ENCODE measurements at regions of chr1 and their contacts with region 1.

Region 1: DNA sequence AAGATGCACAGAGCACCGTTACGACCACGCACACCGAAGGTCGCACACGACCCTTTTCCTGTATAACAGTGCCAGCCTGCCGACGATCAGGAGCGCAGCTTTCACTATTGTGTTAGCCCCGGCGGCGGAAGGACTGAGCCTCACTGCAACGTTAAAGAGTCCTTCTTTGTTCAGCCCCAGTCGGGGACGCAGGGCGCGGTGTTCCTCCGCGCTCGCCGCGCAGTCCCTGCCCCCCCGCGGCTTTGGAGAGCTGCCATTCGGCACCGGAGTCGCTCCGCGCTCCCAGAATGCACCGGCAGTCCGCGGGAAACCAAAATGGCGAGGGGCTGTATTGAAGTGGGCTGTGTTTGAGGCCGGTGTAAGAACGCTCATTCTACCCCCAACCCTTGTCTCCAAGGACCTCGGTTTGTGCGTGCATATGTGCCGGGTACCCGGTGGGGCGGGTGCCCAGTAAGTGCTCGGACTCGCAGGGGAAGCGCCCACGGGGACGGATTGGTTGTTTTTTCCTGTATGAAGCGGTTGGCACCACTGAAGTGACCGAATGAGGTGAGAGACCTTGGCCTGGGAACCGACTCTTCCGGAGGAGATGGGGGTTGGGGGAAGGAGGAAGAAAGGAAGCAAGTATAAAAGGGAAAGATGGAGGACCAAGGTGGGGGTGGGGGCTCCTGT is at the start of gene MTF2:
- DNase-seq: peak; percentile 91 to 98
- H3K4me3 ChIP-seq: peak within 1 kb of the TSS; percentile 82 to 100 (median 98)
- H3K27ac ChIP-seq: peak within 1 kb of the TSS; percentile 97
- H3K4me1 ChIP-seq: no peaks in the 10 kb centered on the region; a peak in 2 of 7 replicates
- H3K27me3 ChIP-seq: no peaks in the 10 kb centered on the region
- CTCF ChIP-seq: peak in 1 of 3 experiments; percentile 19; a peak in 1 of 4 replicates
- EP300 ChIP-seq: peak; percentile 21 to 96
- POLR2A ChIP-seq: peak; percentile 96 to 98
- RAD21 ChIP-seq: peak; percentile 22 to 24; a peak in 1 of 4 replicates
- total RNA-seq, gene MTF2: 101 and 102 TPM in 2 replicates

Region 2: DNA sequence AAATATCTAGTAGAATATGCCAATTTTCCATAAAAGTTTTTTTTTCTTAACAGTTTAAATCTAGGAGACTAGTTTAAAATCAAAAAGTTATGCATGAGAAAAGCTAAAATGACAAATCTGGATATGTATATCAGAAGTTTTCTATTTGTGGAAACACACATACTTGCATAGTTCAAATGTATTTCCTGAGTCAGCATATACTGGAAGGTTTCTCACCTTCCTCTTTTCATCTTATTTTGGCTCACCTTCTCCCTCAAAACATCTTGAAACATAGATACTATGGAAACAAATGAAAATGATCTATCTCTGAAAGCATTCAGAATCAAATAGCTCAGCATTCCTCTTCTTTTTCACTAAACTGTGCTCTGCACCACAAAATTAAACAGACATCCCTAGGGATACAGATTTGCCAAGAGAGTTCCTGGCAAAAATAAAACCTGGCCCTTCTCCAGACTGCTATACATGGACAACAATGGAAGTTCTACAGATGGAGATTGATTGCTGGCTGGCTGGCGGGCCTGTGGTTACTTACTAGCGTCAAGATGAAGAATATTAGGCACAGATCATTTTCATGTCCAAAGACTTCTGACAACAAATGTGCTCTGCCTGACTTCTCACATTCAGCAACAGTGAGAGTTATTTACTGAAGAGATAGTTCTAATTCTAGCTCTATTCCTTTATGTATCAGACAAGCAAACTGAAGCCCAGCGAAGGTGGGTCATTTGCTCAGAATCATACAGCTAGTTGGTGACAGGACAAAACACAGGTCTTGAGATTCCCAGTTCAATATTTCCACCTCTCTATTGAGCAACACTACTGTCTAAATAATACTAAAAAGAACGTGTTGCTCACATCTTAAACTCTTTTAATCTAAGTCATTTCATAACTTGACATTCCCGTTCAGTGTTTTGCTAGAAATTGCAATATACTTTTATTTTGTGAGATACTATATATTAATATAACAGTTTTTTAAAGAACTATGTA is 144.4 kb before region 1 on chr1:
- CTCF ChIA-PET with region 1: no interaction called
- POLR2A ChIA-PET with region 1: no interaction called
- DNase-seq: no peak
- H3K4me3 ChIP-seq: no peak overlapping the region
- H3K27ac ChIP-seq: no peak overlapping the region
- H3K4me1 ChIP-seq: no peaks in the 10 kb centered on the region
- H3K27me3 ChIP-seq: no peaks in the 10 kb centered on the region
- CTCF ChIP-seq: no peak
- EP300 ChIP-seq: no peak
- POLR2A ChIP-seq: no peak
- RAD21 ChIP-seq: no peak

Region 3: DNA sequence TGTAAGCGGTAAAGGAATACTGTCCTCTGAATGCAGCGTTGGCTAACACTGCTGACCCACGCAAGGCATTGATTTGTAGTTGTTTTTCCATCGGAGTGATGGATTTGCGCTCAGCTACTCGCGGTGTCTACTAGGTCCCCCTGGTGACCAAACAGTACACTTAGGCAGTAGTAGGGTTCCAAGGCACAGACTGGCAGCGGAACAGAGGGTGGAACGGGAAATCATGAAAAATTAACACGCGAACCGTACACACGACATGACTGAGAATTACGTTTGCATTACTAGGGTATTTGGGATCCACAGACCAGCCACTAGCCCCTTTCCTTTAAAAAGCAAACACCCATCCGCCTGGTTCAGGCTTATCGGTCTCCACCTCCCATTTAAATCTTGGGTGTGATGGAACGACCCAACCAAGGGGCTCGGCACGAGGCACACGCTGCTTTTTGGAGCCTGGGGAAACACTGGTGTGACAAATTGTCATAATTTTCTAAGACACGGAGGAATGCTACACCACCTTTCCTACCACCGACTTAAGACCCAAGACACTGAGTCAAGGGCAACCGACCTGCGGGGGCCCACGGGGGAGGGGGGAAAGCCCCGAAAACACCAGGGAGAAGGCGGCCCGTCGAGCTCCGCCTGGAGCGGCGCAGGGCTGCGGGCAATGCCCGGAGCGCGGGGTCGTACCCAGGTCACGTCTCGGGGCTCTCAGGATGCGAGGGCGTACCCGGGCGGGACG is 118.6 kb before region 1 on chr1:
- CTCF ChIA-PET with region 1: no interaction called
- POLR2A ChIA-PET with region 1: interaction called, 11 read pairs
- DNase-seq: no peak
- H3K4me3 ChIP-seq: peak overlapping the region; percentile 55 to 81 (median 63)
- H3K27ac ChIP-seq: no peak overlapping the region
- H3K4me1 ChIP-seq: peaks cover 0 to 4% (median 1%) of the 10 kb centered on the region in 4 experiments; a peak in 4 of 7 replicates
- H3K27me3 ChIP-seq: peaks cover 0 to 7% (median 2%) of the 10 kb centered on the region in 4 experiments; a peak in 4 of 7 replicates
- CTCF ChIP-seq: peak; percentile 57 to 69 (median 59)
- EP300 ChIP-seq: no peak
- POLR2A ChIP-seq: no peak
- RAD21 ChIP-seq: peak; percentile 55 to 65

Region 4: GRCh38 chr1:92987462-92987861 is 91.7 kb before region 1 on chr1:
- CTCF ChIA-PET with region 1: no interaction called
- POLR2A ChIA-PET with region 1: no interaction called
- DNase-seq: no peak
- H3K4me3 ChIP-seq: no peak overlapping the region
- H3K27ac ChIP-seq: no peak overlapping the region
- H3K4me1 ChIP-seq: no peaks in the 10 kb centered on the region
- H3K27me3 ChIP-seq: no peaks in the 10 kb centered on the region
- CTCF ChIP-seq: no peak
- EP300 ChIP-seq: no peak
- POLR2A ChIP-seq: no peak
- RAD21 ChIP-seq: no peak

Region 5: DNA sequence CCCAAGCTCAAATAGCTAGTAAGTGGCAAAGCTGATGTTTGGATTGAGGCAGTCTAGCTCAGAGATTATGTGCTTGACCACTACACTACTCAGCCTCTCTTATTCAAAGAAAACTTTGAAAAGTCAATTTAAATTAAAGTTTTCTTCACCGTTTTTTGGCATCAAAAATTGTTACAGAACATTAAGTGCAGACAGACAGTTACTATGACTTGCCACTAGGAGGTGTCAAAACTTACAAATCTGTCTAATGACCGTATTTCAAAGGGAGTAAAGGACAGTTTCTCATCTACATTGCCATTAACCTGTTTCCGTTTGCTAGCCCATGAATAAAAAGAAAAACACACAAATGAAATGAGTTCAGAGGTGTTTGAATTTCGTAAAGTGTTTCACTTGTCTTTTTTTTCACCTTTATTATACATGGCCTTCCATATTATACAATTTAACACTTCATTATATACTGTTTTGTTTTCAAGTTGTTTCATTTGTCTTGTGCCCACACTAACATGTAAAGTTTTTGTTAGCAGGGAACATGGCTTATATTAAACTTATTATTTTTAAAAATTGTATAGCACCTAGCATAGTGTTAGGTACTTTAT is 57.5 kb before region 1 on chr1:
- CTCF ChIA-PET with region 1: interaction called, 3 read pairs
- POLR2A ChIA-PET with region 1: interaction called, 10 read pairs
- DNase-seq: no peak
- H3K4me3 ChIP-seq: no peak overlapping the region
- H3K27ac ChIP-seq: no peak overlapping the region
- H3K4me1 ChIP-seq: no peaks in the 10 kb centered on the region; a peak in 1 of 7 replicates
- H3K27me3 ChIP-seq: no peaks in the 10 kb centered on the region
- CTCF ChIP-seq: peak in 2 of 3 experiments; percentile 55 to 71; a peak in 2 of 4 replicates
- EP300 ChIP-seq: no peak
- POLR2A ChIP-seq: no peak
- RAD21 ChIP-seq: peak; percentile 82 to 84

Region 6: GRCh38 chr1:93061895-93062792 is 17.0 kb before region 1 on chr1:
- CTCF ChIA-PET with region 1: interaction called, 6 read pairs
- POLR2A ChIA-PET with region 1: interaction called, 65 read pairs
- DNase-seq: peak in 1 of 2 experiments; percentile 49
- H3K4me3 ChIP-seq: no peak overlapping the region
- H3K27ac ChIP-seq: no peak overlapping the region
- H3K4me1 ChIP-seq: no peaks in the 10 kb centered on the region
- H3K27me3 ChIP-seq: no peaks in the 10 kb centered on the region
- CTCF ChIP-seq: peak; percentile 58 to 78 (median 75)
- EP300 ChIP-seq: no peak
- POLR2A ChIP-seq: no peak
- RAD21 ChIP-seq: peak; percentile 86 to 89

Region 7: DNA sequence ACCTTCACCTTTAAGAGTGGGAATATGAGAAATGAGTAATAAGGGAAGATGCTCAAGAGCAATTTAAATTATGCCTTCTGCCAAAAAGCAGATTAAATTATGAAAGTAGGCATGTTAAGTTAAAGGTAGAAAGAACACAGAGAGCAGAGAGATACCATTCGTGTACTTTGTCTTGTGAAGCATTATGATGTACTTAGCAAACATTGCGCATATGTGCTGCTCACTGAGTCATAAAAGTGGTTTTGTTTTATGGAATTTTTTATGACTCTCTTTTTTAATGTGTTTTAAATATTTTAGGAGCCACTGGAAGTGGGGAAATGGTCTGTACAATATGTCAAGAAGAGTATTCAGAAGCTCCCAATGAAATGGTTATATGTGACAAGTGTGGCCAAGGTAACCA is 35.3 kb after region 1 on chr1:
- CTCF ChIA-PET with region 1: interaction called, 7 read pairs
- POLR2A ChIA-PET with region 1: interaction called, 17 read pairs
- DNase-seq: no peak
- H3K4me3 ChIP-seq: no peak overlapping the region
- H3K27ac ChIP-seq: no peak overlapping the region
- H3K4me1 ChIP-seq: peaks cover 0 to 8% (median 0%) of the 10 kb centered on the region in 4 experiments; a peak in 1 of 7 replicates
- H3K27me3 ChIP-seq: no peaks in the 10 kb centered on the region
- CTCF ChIP-seq: no peak
- EP300 ChIP-seq: no peak
- POLR2A ChIP-seq: no peak
- RAD21 ChIP-seq: no peak

Region 8: GRCh38 chr1:93179886-93180722 is 101.0 kb after region 1 on chr1 and contains the start of gene TMED5:
- CTCF ChIA-PET with region 1: no interaction called
- POLR2A ChIA-PET with region 1: interaction called, 11 read pairs
- DNase-seq: peak; percentile 91 to 92
- H3K4me3 ChIP-seq: peak within 1 kb of the TSS; percentile 90 to 99 (median 97)
- H3K27ac ChIP-seq: peak within 1 kb of the TSS; percentile 80
- H3K4me1 ChIP-seq: no peaks in the 10 kb centered on the region; a peak in 1 of 7 replicates
- H3K27me3 ChIP-seq: no peaks in the 10 kb centered on the region
- CTCF ChIP-seq: peak in 2 of 3 experiments; percentile 3 to 7; a peak in 1 of 4 replicates
- EP300 ChIP-seq: no peak
- POLR2A ChIP-seq: peak; percentile 65 to 77
- RAD21 ChIP-seq: no peak
- total RNA-seq, gene TMED5: 32.8 and 33.1 TPM in 2 replicates

Measured in H1 (cell line).